Natural killer cell (primary cell): ENCODE measurements at regions of chr6 and their contacts with region 1.

Region 1: DNA sequence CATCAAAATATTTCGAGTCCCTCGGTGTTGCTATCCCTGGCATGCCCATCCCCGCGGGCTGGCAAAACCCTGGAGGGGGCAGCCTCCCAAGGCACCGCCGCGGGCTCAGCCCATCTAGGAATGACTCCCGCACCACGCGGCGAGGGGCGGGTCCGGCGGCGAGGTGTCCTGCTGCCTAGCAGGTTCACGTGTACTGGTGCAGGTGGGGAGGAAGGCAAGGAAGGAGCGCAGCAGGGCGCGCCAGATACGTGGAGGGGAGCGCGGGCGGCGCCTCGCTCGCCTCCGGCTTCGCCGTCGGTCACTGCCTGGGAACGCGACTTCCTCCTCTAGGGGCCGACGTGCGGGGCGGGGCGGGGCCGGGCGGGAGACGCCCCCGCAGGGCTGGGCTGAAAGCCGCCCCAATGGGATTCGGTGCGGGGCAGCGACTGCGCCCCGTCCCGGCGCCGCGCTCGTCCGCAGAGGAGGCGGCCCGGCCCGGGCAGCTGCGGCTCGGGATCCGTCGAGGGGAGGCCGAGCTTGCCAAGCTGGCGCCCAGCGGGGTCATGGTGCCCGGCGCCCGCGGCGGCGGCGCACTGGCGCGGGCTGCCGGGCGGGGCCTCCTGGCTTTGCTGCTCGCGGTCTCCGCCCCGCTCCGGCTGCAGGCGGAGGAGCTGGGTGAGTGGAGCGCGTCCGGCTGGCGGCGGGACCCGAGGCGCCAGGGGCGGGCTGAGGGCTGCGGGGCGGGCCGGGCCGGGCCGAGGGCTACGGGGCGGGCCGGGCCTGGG is at the start of gene DCBLD1:
- DNase-seq: peak; percentile 65 to 69
- ATAC-seq: peak; percentile 83 to 87 (median 84)
- H3K4me3 ChIP-seq: peak within 1 kb of the TSS; percentile 91
- H3K4me3 Mint-ChIP-seq: peak within 1 kb of the TSS; percentile 99
- H3K27ac ChIP-seq: no peak within 1 kb of the TSS
- H3K27ac Mint-ChIP-seq: peak within 1 kb of the TSS; percentile 78 to 87
- H3K4me1 ChIP-seq: peaks cover 20% of the 10 kb centered on the region
- H3K4me1 Mint-ChIP-seq: peaks cover 16 to 31% of the 10 kb centered on the region in 2 donors
- H3K27me3 ChIP-seq: no peaks in the 10 kb centered on the region
- H3K27me3 Mint-ChIP-seq: no peaks in the 10 kb centered on the region
- CTCF ChIP-seq: no peak
- total RNA-seq, gene DCBLD1: 8.4 to 16.1 (median 13.0) TPM

Region 2: GRCh38 chr6:117463762-117464665 is 18.4 kb before region 1 on chr6:
- intact Hi-C with region 1: loop called (anchors 2 kb)
- DNase-seq: no peak
- ATAC-seq: peak; percentile 48 to 80 (median 69)
- H3K4me3 ChIP-seq: no peak overlapping the region
- H3K4me3 Mint-ChIP-seq: peak overlapping the region; percentile 61
- H3K27ac ChIP-seq: no peak overlapping the region
- H3K27ac Mint-ChIP-seq: peak overlapping the region; percentile 60 to 81
- H3K4me1 ChIP-seq: peaks cover 3% of the 10 kb centered on the region
- H3K4me1 Mint-ChIP-seq: peaks cover 55 to 60% of the 10 kb centered on the region in 2 donors
- H3K27me3 ChIP-seq: no peaks in the 10 kb centered on the region
- H3K27me3 Mint-ChIP-seq: no peaks in the 10 kb centered on the region
- CTCF ChIP-seq: no peak

Region 3: GRCh38 chr6:117531346-117531745 is 48.9 kb after region 1 on chr6:
- intact Hi-C with region 1: no loop called
- DNase-seq: no peak
- ATAC-seq: no peak
- H3K4me3 ChIP-seq: no peak overlapping the region
- H3K4me3 Mint-ChIP-seq: no peak overlapping the region
- H3K27ac ChIP-seq: no peak overlapping the region
- H3K27ac Mint-ChIP-seq: no peak overlapping the region
- H3K4me1 ChIP-seq: no peaks in the 10 kb centered on the region
- H3K4me1 Mint-ChIP-seq: peaks cover 0 to 11% of the 10 kb centered on the region in 2 donors
- H3K27me3 ChIP-seq: no peaks in the 10 kb centered on the region
- H3K27me3 Mint-ChIP-seq: no peaks in the 10 kb centered on the region
- CTCF ChIP-seq: no peak

Region 4: GRCh38 chr6:117547688-117548621 is 65.5 kb after region 1 on chr6:
- intact Hi-C with region 1: loop called (anchors 2 kb)
- DNase-seq: peak; percentile 54 to 67
- ATAC-seq: peak; percentile 45 to 65 (median 48)
- H3K4me3 ChIP-seq: peak overlapping the region; percentile 52
- H3K4me3 Mint-ChIP-seq: peak overlapping the region; percentile 88
- H3K27ac ChIP-seq: peak overlapping the region; percentile 72
- H3K27ac Mint-ChIP-seq: peak overlapping the region; percentile 91 to 92
- H3K4me1 ChIP-seq: peaks cover 28% of the 10 kb centered on the region
- H3K4me1 Mint-ChIP-seq: peaks cover 47 to 49% of the 10 kb centered on the region in 2 donors
- H3K27me3 ChIP-seq: no peaks in the 10 kb centered on the region
- H3K27me3 Mint-ChIP-seq: no peaks in the 10 kb centered on the region
- CTCF ChIP-seq: no peak